ENCODE measurements at regions of chr6 and their contacts with region 1.

Region 1: DNA sequence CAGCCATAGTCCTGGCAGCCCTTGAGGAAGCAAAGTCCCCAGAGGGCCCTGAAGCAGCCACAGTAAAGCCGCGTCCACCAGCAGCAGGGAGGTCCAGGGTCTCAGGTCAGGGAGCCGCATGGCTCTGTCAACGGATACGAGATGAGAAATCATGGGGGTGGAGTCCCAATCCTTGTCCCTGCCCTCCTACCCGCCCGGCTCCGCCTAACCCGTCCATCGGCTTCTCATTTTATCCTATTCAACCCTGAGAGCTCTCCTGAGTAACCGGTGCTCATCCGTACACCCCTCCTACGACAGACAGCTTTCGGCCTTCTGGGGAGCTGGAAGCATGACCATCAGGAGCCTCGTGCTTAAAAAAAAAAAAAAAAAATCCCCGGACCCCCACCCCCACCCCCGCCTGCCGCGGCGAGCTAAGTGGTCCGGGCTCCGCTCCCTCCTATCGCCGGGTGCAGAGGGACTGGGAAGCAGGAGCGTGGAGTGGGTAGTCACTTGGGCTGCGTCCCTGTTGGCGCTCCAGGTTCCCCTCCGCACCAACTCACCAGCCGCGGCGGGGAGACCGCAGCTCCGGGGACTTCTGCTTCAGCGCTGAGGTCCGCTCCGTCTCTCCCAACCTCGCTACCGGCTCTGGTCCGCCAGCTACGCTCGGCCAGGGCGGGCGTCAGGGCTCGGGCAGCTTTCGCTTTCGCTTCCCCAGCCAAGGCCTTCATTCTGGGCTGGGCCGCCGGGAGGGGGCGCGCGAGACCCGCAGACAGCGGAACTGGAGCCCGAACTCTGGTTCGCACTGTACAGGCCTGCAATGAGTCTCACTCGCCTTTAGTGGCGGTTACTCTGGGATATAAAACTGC is at the start of gene TAP2:
- DNase-seq: peak; percentile 98
- H3K4me3 ChIP-seq: peak within 1 kb of the TSS; percentile 63 to 94 (median 82)
- H3K27ac ChIP-seq: peak within 1 kb of the TSS; percentile 86 to 96 (median 92)
- H3K4me1 ChIP-seq: peaks cover 20 to 46% (median 26%) of the 10 kb centered on the region in 4 donors
- H3K27me3 ChIP-seq: no peaks in the 10 kb centered on the region
- CTCF ChIP-seq: peak; percentile 94 to 99 (median 98)
- EP300 ChIP-seq: no peak
- POLR2A ChIP-seq: no peak
- total RNA-seq, gene TAP2: 8.6 to 16.3 (median 13.4) TPM

Region 2: DNA sequence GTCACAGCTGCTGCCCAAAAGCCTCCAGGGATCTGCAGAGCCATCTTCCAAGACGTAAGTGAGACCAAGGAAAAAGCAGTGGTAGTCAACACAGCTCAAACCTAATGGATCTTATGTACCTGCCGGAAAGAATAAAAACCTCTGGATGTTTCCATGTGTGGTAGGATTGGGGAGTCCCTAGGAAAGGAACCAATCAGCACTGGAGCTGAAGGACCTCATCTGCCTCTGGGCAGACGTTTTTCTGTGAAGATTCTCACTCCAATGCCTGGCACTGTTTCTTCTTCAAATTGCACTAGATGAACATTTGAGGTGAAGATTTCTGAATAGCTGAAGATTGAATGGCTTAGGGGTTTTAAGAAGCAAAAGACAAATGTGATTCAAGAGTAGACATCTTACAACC is 74.9 kb before region 1 on chr6 and contains the start of gene HLA-DQB2:
- intact Hi-C with region 1: no loop called
- DNase-seq: no peak
- H3K4me3 ChIP-seq: no peak within 1 kb of the TSS
- H3K27ac ChIP-seq: no peak within 1 kb of the TSS
- H3K4me1 ChIP-seq: no peaks in the 10 kb centered on the region
- H3K27me3 ChIP-seq: peaks cover 0 to 51% (median 0%) of the 10 kb centered on the region in 4 donors
- CTCF ChIP-seq: no peak
- EP300 ChIP-seq: no peak
- POLR2A ChIP-seq: no peak
- total RNA-seq, gene HLA-DQB2: 0.33 to 1.7 (median 0.86) TPM

Region 3: GRCh38 chr6:32868257-32868788 is 30.0 kb after region 1 on chr6:
- intact Hi-C with region 1: loop called (anchors 1 kb)
- DNase-seq: peak; percentile 93
- H3K4me3 ChIP-seq: no peak overlapping the region
- H3K27ac ChIP-seq: no peak overlapping the region
- H3K4me1 ChIP-seq: peaks cover 0 to 7% (median 2%) of the 10 kb centered on the region in 4 donors
- H3K27me3 ChIP-seq: peaks cover 0 to 7% (median 2%) of the 10 kb centered on the region in 4 donors
- CTCF ChIP-seq: peak; percentile 94 to 96 (median 95)
- EP300 ChIP-seq: no peak
- POLR2A ChIP-seq: no peak

Measured in esophagus muscularis mucosa (tissue), 4 donors.